ENCODE measurements at regions of chr7 and their contacts with region 1.

Region 1: DNA sequence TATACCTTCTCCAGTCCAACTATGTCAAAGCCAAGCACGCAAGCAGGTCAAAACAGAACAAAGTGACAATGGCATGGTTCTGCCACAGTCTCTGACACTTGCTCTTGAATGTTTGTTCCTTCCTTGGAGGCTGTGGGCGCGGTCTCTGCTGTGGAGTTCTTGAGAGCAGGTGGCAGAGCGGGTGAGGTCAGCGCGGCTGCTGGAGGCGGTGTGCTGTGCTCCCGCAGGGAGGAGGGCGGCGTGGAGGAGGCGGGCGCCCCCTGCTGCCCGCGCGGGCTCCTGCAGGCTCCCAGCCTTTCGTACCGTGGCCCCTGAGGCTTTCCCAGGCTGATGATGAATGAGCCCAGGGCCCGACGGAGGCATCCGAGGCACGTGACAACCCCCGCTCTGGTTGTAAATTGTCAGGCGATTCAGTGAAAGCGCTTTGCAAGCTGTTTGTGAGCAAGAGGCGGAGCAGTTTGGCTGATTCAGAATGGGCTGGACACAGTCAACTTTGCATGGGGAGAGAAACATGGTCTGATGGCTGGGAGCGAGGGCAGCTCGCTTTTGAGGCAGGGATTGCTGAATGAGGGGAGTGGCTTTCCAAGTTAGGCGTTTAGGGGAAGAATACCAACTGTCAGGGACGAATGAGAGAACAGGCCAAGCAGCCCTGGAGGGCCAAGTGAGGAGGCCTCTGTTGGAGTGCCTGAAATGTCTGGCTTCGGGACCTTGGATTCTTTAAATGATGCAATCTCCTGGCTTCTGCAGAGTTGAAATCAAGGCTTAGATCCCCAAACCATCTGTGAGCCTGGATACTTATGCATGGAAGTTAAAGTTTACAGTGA is 46.6 kb downstream of the CDHR3 start:
- DNase-seq: peak; percentile 90 to 93
- ATAC-seq: peak; percentile 94
- H3K4me3 ChIP-seq: no peak overlapping the region
- H3K27ac ChIP-seq: no peak overlapping the region
- H3K4me1 ChIP-seq: no peaks in the 10 kb centered on the region
- H3K27me3 ChIP-seq: no peaks in the 10 kb centered on the region

Region 2: DNA sequence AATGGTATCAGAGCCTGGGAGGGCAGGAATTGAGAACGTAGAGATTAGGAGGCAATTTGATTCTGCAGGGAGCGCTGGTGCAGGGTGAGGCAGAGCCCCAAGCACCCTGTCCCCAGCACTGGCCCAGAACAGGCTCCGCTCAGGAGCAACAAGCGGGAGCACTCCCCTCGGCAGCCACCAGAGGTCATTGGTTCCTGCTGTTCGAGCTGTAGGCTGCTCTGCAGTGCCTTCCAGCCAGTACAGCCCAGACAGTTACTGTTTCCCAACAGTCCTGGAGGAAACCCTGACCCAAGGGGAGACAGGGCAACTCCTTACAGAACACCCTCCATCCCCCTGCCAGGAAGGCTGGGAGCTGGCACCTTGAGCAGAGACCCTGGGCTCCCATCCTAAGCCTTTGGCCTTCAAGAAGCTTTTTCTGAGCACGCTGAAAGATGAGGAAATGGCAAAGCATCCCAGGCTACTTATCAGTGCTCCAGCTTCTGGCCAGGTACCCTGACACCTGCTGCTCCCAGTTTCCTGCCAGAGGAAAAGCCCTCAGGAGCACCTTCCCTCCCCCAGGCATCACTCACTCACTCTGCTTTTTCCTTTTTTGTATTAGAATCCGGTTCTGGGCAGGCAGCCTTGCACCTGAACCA is 357.1 kb before region 1 on chr7:
- intact Hi-C with region 1: loop called (anchors 2 to 10 kb)
- DNase-seq: peak; percentile 78 to 91
- ATAC-seq: peak; percentile 85
- H3K4me3 ChIP-seq: no peak overlapping the region
- H3K27ac ChIP-seq: no peak overlapping the region
- H3K4me1 ChIP-seq: no peaks in the 10 kb centered on the region
- H3K27me3 ChIP-seq: no peaks in the 10 kb centered on the region

Region 3: GRCh38 chr7:105759670-105760550 is 249.7 kb before region 1 on chr7:
- intact Hi-C with region 1: loop called (anchors 10 kb)
- DNase-seq: no peak
- ATAC-seq: no peak
- H3K4me3 ChIP-seq: no peak overlapping the region
- H3K27ac ChIP-seq: no peak overlapping the region
- H3K4me1 ChIP-seq: no peaks in the 10 kb centered on the region
- H3K27me3 ChIP-seq: no peaks in the 10 kb centered on the region

Region 4: GRCh38 chr7:105876091-105876963 is 133.3 kb before region 1 on chr7 and contains the start of gene ATXN7L1:
- intact Hi-C with region 1: loop called (anchors 2 to 5 kb)
- DNase-seq: peak; percentile 97 to 98
- ATAC-seq: peak; percentile 98
- H3K4me3 ChIP-seq: peak within 1 kb of the TSS; percentile 59 to 71
- H3K27ac ChIP-seq: peak within 1 kb of the TSS in 1 of 2 donors; percentile 20
- H3K4me1 ChIP-seq: peaks cover 0 to 4% of the 10 kb centered on the region in 2 donors
- H3K27me3 ChIP-seq: no peaks in the 10 kb centered on the region
- total RNA-seq, gene ATXN7L1: 12.8 to 20.1 TPM

Region 5: GRCh38 chr7:106094800-106095199 is 85.2 kb after region 1 on chr7:
- intact Hi-C with region 1: no loop called
- DNase-seq: no peak
- ATAC-seq: no peak
- H3K4me3 ChIP-seq: no peak overlapping the region
- H3K27ac ChIP-seq: no peak overlapping the region
- H3K4me1 ChIP-seq: no peaks in the 10 kb centered on the region
- H3K27me3 ChIP-seq: no peaks in the 10 kb centered on the region